Adrenal gland (tissue), 19 donors: ENCODE measurements at regions of chr15 and their contacts with region 1.

Region 1: DNA sequence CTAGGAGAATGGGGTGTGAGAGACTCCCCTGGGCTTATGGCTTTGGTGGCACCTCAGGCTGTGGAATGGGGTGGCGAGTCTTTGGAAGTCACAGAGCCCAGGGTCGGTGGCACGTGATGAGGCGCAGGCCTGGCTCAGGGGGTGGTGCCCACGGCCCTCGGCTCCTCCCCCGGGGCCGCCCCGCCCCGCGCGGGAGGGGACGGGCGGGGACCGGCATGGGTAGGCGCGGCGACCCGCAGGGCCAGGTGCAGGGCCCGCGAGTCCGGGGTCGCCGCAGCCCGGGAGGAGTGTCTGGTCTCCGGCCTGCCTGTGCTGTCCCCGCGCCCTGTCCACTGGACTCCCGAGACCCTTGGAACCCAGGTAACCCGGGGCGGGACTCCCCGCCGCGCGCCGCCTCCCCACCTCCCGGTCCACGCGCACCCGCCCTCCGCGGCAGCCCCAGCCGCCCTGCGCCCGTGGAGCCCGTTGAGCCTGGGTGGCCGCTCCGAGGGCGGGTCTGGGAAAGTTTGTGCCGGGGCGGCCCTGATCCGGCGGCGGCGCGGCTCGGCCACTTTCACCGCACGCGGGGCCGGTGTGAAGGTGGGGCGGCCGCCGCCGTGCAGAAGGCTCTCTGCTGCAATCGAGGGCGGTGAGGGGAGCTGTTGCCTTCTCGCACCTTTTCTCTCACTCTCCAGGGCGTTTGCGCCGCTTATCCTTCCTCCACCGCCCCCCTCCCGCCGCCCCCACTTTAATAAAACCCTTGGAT is at the start of gene PAQR5:
- DNase-seq: peak; percentile 50 to 73 (median 67)
- H3K4me3 ChIP-seq: peak within 1 kb of the TSS in 2 of 4 donors; percentile 61 to 85
- H3K27ac ChIP-seq: peak within 1 kb of the TSS in 3 of 5 donors; percentile 26 to 58 (median 49)
- H3K4me1 ChIP-seq: peaks cover 9 to 16% of the 10 kb centered on the region in 2 donors
- H3K27me3 ChIP-seq: no peaks in the 10 kb centered on the region
- CTCF ChIP-seq: no peak
- POLR2A ChIP-seq: peak; percentile 16 to 61
- total RNA-seq, gene PAQR5: 13.9 to 78.2 (median 51.2) TPM

Region 2: GRCh38 chr15:68335251-68335650 is 963.6 kb before region 1 on chr15:
- intact Hi-C with region 1: no loop called
- DNase-seq: peak; percentile 72 to 86 (median 81)
- H3K4me3 ChIP-seq: no peak overlapping the region
- H3K27ac ChIP-seq: peak overlapping the region in 4 of 5 donors; percentile 33 to 84 (median 68)
- H3K4me1 ChIP-seq: peaks cover 26 to 36% of the 10 kb centered on the region in 2 donors
- H3K27me3 ChIP-seq: no peaks in the 10 kb centered on the region
- CTCF ChIP-seq: no peak
- POLR2A ChIP-seq: no peak

Region 3: DNA sequence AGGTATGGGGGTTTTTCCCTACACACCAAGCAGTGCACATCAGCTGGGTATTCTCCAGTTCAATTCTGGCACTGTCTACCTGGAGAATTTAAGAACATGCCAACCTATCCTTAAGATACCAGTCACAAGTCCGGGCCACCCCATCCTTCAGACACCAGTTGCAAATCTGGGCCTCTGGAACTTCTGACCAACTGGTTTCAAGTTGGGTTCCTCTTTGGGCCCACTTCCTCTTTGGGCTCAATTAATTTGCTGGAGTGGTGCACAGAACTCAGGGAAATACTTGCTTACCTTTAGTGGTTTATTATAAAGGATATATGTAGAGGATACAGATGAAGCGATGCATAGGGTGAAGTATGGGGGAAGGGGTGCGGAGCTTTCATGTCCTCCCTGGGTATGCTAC is 113.2 kb before region 1 on chr15:
- intact Hi-C with region 1: no loop called
- DNase-seq: no peak
- H3K4me3 ChIP-seq: no peak overlapping the region
- H3K27ac ChIP-seq: no peak overlapping the region
- H3K4me1 ChIP-seq: no peaks in the 10 kb centered on the region
- H3K27me3 ChIP-seq: no peaks in the 10 kb centered on the region
- CTCF ChIP-seq: no peak
- POLR2A ChIP-seq: no peak

Region 4: GRCh38 chr15:69380100-69380727 is 81.3 kb after region 1 on chr15:
- intact Hi-C with region 1: loop called in 1 of 2 experiments (anchors 10 kb)
- DNase-seq: peak in 3 of 7 donors; percentile 7 to 25 (median 14)
- H3K4me3 ChIP-seq: no peak overlapping the region
- H3K27ac ChIP-seq: no peak overlapping the region
- H3K4me1 ChIP-seq: peaks cover 0 to 5% of the 10 kb centered on the region in 2 donors
- H3K27me3 ChIP-seq: no peaks in the 10 kb centered on the region
- CTCF ChIP-seq: no peak
- POLR2A ChIP-seq: no peak